Heart right ventricle (tissue), 16 donors: ENCODE measurements at regions of chr3 and their contacts with region 1.

Region 1: GRCh38 chr3:136196401-136197158 is 445 bp upstream of the MSL2 start:
- DNase-seq: peak; percentile 99
- ATAC-seq: peak; percentile 89 to 96 (median 94)
- H3K4me3 ChIP-seq: peak overlapping the region; percentile 70 to 95 (median 80)
- H3K27ac ChIP-seq: peak overlapping the region; percentile 98 to 100 (median 100)
- H3K4me1 ChIP-seq: peaks cover 3 to 39% (median 31%) of the 10 kb centered on the region in 9 donors
- H3K27me3 ChIP-seq: no peaks in the 10 kb centered on the region
- CTCF ChIP-seq: peak in 1 of 9 donors; percentile 10

Region 2: GRCh38 chr3:135965506-135966270 is 230.9 kb before region 1 on chr3 and contains the start of gene PPP2R3A:
- intact Hi-C with region 1: loop called in 1 of 10 experiments (anchors 5 kb)
- DNase-seq: peak; percentile 83 to 89
- ATAC-seq: peak; percentile 92 to 99 (median 96)
- H3K4me3 ChIP-seq: peak within 1 kb of the TSS; percentile 66 to 87 (median 76)
- H3K27ac ChIP-seq: peak within 1 kb of the TSS; percentile 42 to 94 (median 90)
- H3K4me1 ChIP-seq: peaks cover 0 to 35% (median 17%) of the 10 kb centered on the region in 9 donors
- H3K27me3 ChIP-seq: peaks cover 0 to 17% (median 0%) of the 10 kb centered on the region in 7 donors
- CTCF ChIP-seq: no peak
- total RNA-seq, gene PPP2R3A: 59.7 to 148 (median 115) TPM

Region 3: DNA sequence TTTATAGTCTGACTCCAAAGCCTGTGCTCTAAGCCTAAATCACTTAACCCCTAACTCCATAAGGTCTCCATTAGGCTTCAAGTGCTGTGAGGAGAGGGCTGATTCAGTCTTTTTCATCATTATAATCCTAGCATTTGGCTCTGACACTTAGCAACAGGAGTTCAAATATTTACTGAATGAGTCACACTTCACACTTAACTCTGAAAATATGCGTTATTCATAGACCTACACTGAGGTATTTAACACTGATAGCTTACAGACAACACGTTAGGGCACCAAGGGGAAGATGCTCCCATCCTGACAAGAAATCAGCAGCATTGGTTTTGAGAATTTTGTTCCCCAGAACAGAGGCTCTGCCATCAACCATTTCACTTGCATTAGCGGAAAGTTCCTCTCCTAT is 54.0 kb before region 1 on chr3:
- intact Hi-C with region 1: loop called in 2 of 10 experiments (anchors 10 kb)
- DNase-seq: no peak
- ATAC-seq: peak in 6 of 8 donors; percentile 22 to 70 (median 60)
- H3K4me3 ChIP-seq: no peak overlapping the region
- H3K27ac ChIP-seq: peak overlapping the region in 6 of 10 donors; percentile 7 to 46 (median 16)
- H3K4me1 ChIP-seq: peaks cover 0 to 32% (median 16%) of the 10 kb centered on the region in 9 donors
- H3K27me3 ChIP-seq: no peaks in the 10 kb centered on the region
- CTCF ChIP-seq: no peak

Region 4: GRCh38 chr3:136149667-136150066 is 46.9 kb before region 1 on chr3:
- intact Hi-C with region 1: loop called in 4 of 10 experiments (anchors 5 to 10 kb)
- DNase-seq: no peak
- ATAC-seq: no peak
- H3K4me3 ChIP-seq: no peak overlapping the region
- H3K27ac ChIP-seq: no peak overlapping the region
- H3K4me1 ChIP-seq: peaks cover 0 to 58% (median 40%) of the 10 kb centered on the region in 9 donors
- H3K27me3 ChIP-seq: no peaks in the 10 kb centered on the region
- CTCF ChIP-seq: no peak

Region 5: GRCh38 chr3:136250226-136250902 is 53.8 kb after region 1 on chr3 and contains the start of gene PCCB:
- intact Hi-C with region 1: loop called in 7 of 10 experiments (anchors 1 to 5 kb)
- DNase-seq: peak; percentile 92 to 95
- ATAC-seq: peak; percentile 97 to 99 (median 99)
- H3K4me3 ChIP-seq: peak within 1 kb of the TSS; percentile 29 to 82 (median 70)
- H3K27ac ChIP-seq: peak within 1 kb of the TSS; percentile 66 to 95 (median 91)
- H3K4me1 ChIP-seq: peaks cover 0 to 23% (median 14%) of the 10 kb centered on the region in 9 donors
- H3K27me3 ChIP-seq: no peaks in the 10 kb centered on the region
- CTCF ChIP-seq: peak; percentile 65 to 96 (median 84)
- total RNA-seq, gene PCCB: 78.6 to 163 (median 132) TPM